Sigmoid colon (tissue), 7 donors: ENCODE measurements at regions of chr11 and their contacts with region 1.

Region 1: DNA sequence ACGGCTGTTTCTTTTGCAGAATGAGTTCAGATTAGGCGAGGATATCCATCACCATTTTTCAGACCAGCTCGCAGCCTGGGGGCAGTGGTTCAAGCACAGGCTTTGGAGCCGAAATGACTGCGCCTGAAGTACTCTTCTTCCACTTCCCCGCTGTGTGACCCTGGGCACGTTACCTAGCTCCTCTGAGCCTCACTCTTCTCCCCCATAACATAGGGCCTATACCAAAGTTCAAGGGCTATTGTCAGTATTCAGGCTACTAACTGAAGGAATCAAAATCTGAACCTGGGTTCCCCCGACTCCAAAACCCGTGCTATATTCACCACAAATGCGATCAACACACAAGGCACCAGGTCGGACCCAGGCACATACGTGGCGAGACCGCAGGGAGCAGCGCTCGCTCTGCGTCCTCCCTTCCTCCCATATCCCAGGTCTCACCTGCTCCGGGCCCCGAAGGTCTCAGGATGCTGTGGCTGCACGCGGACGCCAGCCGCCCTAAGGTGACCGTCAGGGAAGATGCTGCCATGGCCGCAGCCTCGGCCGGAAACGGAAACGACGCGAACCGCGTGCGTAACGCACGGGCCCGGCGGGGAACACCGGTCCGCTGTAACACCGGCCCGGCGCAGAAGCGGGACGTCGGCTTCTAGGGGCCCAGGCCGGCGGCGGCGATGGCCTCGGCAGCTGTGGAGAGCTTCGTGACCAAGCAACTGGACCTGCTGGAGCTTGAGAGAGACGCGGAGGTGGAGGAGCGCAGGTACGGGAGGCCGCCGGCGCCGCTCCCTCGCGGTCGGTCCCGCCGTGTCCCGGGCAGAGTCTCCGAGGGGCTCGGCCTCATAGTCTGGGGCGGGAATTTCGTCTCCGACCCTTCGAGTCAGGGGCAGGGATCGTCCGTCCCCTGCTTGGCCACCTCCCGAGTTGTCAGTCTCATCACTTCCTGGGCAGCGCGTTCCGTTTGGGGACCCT is at the starts of genes IGHMBP2 and MRPL21:
- DNase-seq: peak; percentile 92
- H3K4me3 ChIP-seq: peak within 1 kb of the TSS; percentile 63 to 94 (median 80)
- H3K27ac ChIP-seq: peak within 1 kb of the TSS; percentile 85 to 94 (median 91)
- H3K4me1 ChIP-seq: peaks cover 2 to 38% (median 31%) of the 10 kb centered on the region in 4 donors
- H3K27me3 ChIP-seq: no peaks in the 10 kb centered on the region
- CTCF ChIP-seq: no peak
- EP300 ChIP-seq: no peak
- POLR2A ChIP-seq: peak; percentile 57 to 71
- total RNA-seq, gene IGHMBP2: 12.2 to 41.3 (median 30.4) TPM
- total RNA-seq, gene MRPL21: 53.7 to 99.1 (median 67.5) TPM

Region 2: DNA sequence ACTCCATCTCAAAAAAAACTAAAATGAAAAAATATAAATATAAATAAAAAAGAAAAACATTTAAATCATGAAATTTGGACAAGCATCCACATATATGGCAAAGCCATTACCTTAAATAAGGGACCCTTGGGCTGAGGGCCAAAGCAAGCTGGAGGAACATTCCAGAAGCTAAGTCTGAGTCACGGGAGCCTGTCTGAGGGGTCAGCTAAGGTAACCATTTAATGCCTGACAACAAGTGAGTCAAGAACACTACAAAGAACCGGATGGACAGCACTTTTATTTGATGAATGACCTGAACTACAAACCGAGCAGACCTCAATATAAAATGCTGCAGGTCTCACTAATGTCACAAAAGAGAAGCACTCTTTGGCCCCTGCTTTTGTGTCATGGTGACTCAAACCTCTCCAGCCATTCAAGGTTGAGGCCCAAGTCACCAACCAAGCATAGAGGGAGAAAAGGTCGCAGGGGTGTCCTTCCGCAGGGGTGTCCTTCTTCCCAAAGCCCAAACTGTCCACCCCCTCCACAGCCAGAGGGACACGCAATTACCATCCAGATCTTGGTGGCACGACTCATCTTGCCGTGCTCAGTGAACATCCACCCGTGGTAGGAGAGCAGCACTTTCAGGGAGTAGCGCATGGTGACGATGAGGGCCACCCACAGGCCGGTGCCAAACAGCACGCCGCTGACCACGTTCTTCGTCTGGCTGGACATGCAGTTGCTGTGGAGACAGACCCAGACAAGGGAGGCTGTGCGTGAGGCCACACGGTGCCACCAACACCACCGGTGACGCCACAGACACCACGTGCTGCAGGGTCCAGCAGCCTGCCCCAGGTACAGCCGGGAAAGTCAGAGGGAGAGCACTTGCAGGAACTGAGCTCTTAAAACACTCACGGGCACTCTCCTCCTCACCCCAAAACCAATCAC is 96.4 kb before region 1 on chr11:
- intact Hi-C with region 1: no loop called
- DNase-seq: no peak
- H3K4me3 ChIP-seq: no peak overlapping the region
- H3K27ac ChIP-seq: peak overlapping the region in 1 of 4 donors; percentile 30
- H3K4me1 ChIP-seq: peaks cover 0 to 29% (median 20%) of the 10 kb centered on the region in 4 donors
- H3K27me3 ChIP-seq: no peaks in the 10 kb centered on the region
- CTCF ChIP-seq: no peak
- EP300 ChIP-seq: peak in 1 of 4 donors; percentile 17
- POLR2A ChIP-seq: no peak

Region 3: DNA sequence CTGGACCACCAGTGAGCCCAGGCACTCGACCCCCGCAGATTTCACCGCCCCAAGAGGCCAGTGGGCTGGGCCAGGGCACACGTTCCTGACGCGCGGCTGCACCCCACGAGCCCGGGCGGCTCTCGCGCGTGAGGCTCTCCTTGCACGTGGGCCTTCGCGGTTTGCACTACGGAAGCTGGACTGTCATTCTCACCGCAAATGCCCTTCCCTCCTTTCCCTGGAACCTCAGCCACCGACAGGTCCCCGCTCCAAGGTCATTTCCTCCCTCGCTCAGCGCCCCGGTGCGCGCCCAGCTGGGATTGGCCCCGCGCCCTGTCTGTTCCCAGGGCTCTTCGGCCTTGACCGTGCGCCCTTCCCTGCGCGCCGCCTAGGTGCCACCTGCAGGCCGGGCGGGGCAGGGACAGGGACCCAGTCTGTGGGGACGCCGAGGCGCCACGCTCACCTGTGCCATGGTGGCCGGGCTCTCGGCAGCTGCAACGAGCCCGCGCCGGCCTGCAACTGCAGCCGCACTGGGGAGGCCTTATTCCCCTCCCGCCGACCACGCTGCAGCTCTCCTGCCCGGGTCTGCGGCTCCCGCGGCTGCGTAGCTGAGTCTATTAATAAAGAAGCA is 59.8 kb before region 1 on chr11:
- intact Hi-C with region 1: loop called (anchors 5 kb)
- DNase-seq: peak; percentile 84
- H3K4me3 ChIP-seq: peak overlapping the region; percentile 13 to 92 (median 81)
- H3K27ac ChIP-seq: peak overlapping the region; percentile 32 to 98 (median 95)
- H3K4me1 ChIP-seq: peaks cover 0 to 41% (median 37%) of the 10 kb centered on the region in 4 donors
- H3K27me3 ChIP-seq: no peaks in the 10 kb centered on the region
- CTCF ChIP-seq: peak; percentile 43 to 57 (median 46)
- EP300 ChIP-seq: no peak
- POLR2A ChIP-seq: no peak

Region 4: GRCh38 chr11:69048718-69049489 is 145.3 kb after region 1 on chr11 and contains the start of gene TPCN2:
- intact Hi-C with region 1: loop called (anchors 5 kb)
- DNase-seq: peak; percentile 98
- H3K4me3 ChIP-seq: peak within 1 kb of the TSS; percentile 70 to 99 (median 92)
- H3K27ac ChIP-seq: peak within 1 kb of the TSS; percentile 94 to 99 (median 98)
- H3K4me1 ChIP-seq: peaks cover 0 to 64% (median 59%) of the 10 kb centered on the region in 4 donors
- H3K27me3 ChIP-seq: no peaks in the 10 kb centered on the region
- CTCF ChIP-seq: no peak
- EP300 ChIP-seq: peak in 1 of 4 donors; percentile 73
- POLR2A ChIP-seq: peak; percentile 59 to 87
- total RNA-seq, gene TPCN2: 17.5 to 43.5 (median 25.3) TPM

Region 5: GRCh38 chr11:69670158-69670845 is 766.7 kb after region 1 on chr11:
- intact Hi-C with region 1: loop called (anchors 10 kb)
- DNase-seq: peak; percentile 92
- H3K4me3 ChIP-seq: no peak overlapping the region
- H3K27ac ChIP-seq: peak overlapping the region; percentile 54 to 71 (median 62)
- H3K4me1 ChIP-seq: peaks cover 0 to 32% (median 29%) of the 10 kb centered on the region in 4 donors
- H3K27me3 ChIP-seq: no peaks in the 10 kb centered on the region
- CTCF ChIP-seq: peak; percentile 75 to 94 (median 88)
- EP300 ChIP-seq: no peak
- POLR2A ChIP-seq: no peak